ENCODE measurements at regions of chr3 and their contacts with region 1.

Region 1: DNA sequence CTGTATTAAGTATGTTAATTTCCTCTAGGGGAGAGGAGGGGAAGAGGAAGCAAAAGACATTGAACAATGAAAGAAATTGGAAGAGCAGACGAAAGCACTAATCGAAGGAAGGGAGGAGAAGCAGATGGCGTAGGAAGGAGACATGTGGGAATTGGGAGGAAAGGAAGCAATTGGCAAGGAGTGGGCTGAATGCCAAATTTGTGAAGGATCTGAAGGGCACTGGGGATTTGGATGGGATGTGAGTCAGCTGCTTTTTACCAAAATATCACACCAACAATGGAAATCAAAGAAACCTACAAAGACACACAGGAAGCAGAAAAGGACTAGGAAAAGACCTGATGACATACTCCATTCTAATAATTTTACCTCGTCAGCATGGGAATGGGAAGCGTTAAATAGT is 1029.8 kb downstream of the ROBO1 start:
- DNase-seq: no peak
- ATAC-seq: no peak
- H3K4me3 ChIP-seq: no peak overlapping the region
- H3K27ac ChIP-seq: no peak overlapping the region
- H3K4me1 ChIP-seq: no peaks in the 10 kb centered on the region
- H3K27me3 ChIP-seq: no peaks in the 10 kb centered on the region
- CTCF ChIP-seq: no peak
- EP300 ChIP-seq: no peak
- POLR2A ChIP-seq: no peak
- RAD21 ChIP-seq: no peak

Region 2: DNA sequence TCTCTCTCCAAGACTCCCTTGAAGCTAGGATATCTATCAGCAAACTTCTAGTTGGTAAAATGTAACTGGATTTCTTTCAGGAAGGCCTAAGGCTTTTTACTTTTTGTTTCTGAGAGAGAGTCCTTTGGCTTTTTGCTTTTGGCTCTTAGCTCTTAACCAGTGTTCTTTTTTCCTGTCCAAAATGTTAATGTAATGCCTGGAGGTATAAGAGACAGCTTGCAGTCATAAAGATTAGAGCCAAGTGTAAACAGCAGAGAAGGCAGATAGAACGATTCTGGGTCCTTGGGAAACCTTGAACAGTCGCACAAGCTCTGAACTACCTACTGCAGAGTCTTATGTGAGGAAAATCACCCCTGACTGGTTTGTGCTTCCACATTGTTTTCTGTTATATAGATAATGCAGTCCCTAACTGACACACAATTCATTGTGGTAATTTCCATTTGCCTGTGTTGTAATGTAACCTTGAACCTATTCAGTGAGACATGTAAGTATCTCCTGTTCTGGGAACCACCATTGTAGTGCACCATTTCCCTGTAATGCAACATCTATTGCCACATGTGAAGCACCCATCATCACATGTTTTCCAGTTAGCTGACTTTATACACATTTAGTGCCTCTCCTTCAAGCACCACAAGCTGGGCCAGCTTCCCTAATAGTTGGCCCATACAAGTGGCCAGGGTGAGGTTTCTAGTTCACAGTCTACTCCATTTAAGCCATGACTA is 282.1 kb before region 1 on chr3:
- CTCF ChIA-PET with region 1: no interaction called
- POLR2A ChIA-PET with region 1: no interaction called
- RAD21 ChIA-PET with region 1: no interaction called
- SMC1A ChIA-PET with region 1: no interaction called
- in situ Hi-C with region 1: no loop called
- intact Hi-C with region 1: no loop called
- DNase-seq: no peak
- ATAC-seq: no peak
- H3K4me3 ChIP-seq: no peak overlapping the region
- H3K27ac ChIP-seq: no peak overlapping the region
- H3K4me1 ChIP-seq: no peaks in the 10 kb centered on the region
- H3K27me3 ChIP-seq: no peaks in the 10 kb centered on the region
- CTCF ChIP-seq: no peak
- EP300 ChIP-seq: no peak
- POLR2A ChIP-seq: no peak
- RAD21 ChIP-seq: no peak

Region 3: DNA sequence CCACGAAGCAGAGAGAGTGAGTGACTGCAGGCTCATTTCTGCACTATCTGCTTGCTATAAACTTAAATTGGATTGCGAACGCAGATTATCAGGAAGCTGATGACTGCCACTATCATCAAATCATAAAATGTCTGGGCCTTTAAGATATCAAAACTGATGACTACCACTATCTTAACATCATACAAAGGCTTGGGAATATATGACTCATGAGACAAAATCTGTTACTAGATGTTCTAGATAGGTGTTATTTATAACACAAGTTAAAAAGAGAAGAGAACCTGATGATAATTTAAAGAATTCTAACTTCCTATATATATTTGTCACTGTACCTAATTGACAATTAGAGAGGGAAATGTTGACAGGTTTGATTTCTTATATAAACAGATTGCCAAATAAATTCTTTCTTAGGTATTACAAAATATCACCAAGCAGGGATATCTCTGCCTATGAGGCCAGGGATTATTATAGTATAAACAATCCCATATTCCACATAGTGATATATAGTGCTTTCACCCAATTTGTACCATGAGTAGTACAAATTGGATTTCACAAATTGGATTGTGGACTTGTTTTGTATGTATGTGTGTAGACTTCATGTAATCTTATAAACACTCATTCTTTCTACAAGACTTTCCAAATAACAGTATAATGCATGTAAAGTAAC is 127.4 kb before region 1 on chr3:
- CTCF ChIA-PET with region 1: no interaction called
- POLR2A ChIA-PET with region 1: no interaction called
- RAD21 ChIA-PET with region 1: no interaction called
- SMC1A ChIA-PET with region 1: no interaction called
- in situ Hi-C with region 1: no loop called
- intact Hi-C with region 1: no loop called
- DNase-seq: no peak
- ATAC-seq: no peak
- H3K4me3 ChIP-seq: no peak overlapping the region
- H3K27ac ChIP-seq: no peak overlapping the region
- H3K4me1 ChIP-seq: no peaks in the 10 kb centered on the region
- H3K27me3 ChIP-seq: no peaks in the 10 kb centered on the region
- CTCF ChIP-seq: no peak
- EP300 ChIP-seq: no peak
- POLR2A ChIP-seq: no peak
- RAD21 ChIP-seq: no peak

Region 4: DNA sequence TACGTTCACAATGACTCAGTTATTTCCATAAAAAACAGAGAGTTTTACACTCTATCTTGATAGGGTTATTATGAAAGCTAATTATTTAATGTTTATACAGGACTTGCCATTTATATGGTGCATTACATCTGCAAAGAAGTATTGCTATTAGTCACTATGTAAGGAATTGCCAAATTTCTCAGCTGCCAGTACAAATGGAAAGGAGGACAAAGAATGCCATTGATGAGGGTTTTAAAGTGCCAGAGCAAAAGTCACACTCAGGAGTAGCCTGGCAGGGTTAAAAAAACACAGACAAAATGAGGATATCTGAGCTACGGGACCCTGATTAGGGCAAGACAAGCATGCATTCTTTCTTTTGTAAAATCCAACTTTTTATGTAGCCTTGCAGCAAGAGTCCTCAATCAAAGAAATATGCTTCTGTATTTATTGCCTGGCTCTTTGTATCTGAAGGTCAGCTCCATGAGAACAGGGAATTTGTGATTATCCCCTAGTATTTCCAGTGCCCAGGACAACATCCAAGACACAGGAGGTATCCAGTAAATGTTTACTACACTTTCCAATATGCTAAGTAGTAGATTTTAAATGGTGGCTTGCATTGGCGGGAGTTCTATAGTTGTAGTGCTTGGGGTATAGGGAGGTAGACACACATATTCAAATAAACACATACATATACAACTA is 16.2 kb after region 1 on chr3:
- CTCF ChIA-PET with region 1: interaction called, 4 read pairs
- POLR2A ChIA-PET with region 1: no interaction called
- RAD21 ChIA-PET with region 1: interaction called, 4 read pairs
- SMC1A ChIA-PET with region 1: interaction called, 14 read pairs
- in situ Hi-C with region 1: no loop called
- intact Hi-C with region 1: no loop called
- DNase-seq: no peak
- ATAC-seq: no peak
- H3K4me3 ChIP-seq: no peak overlapping the region
- H3K27ac ChIP-seq: no peak overlapping the region
- H3K4me1 ChIP-seq: no peaks in the 10 kb centered on the region
- H3K27me3 ChIP-seq: no peaks in the 10 kb centered on the region
- CTCF ChIP-seq: no peak
- EP300 ChIP-seq: no peak
- POLR2A ChIP-seq: no peak
- RAD21 ChIP-seq: no peak

Region 5: DNA sequence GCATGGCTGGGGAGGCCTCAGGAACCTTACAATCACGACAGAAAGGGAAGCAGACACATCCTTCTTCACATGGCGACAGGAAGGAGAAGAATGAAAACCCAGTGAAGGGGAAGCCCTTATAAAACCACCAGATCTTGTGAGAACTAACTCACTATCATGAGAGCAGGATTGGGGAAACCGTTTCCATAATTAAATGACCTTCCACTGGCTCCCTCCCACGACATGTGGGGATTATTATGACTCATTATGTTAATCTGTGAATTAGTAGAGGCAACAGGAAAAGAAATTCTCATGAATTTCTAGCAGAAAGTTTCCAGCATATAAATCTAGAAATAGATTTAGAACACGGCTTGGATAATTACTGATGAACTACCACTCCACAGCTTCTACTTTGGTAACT is 92.5 kb after region 1 on chr3:
- CTCF ChIA-PET with region 1: no interaction called
- POLR2A ChIA-PET with region 1: no interaction called
- RAD21 ChIA-PET with region 1: interaction called, 6 read pairs
- SMC1A ChIA-PET with region 1: interaction called, 7 read pairs
- in situ Hi-C with region 1: no loop called
- intact Hi-C with region 1: loop called (anchors 2 kb)
- DNase-seq: no peak
- ATAC-seq: no peak
- H3K4me3 ChIP-seq: no peak overlapping the region
- H3K27ac ChIP-seq: no peak overlapping the region
- H3K4me1 ChIP-seq: no peaks in the 10 kb centered on the region
- H3K27me3 ChIP-seq: no peaks in the 10 kb centered on the region
- CTCF ChIP-seq: no peak
- EP300 ChIP-seq: no peak
- POLR2A ChIP-seq: no peak
- RAD21 ChIP-seq: no peak

Region 6: DNA sequence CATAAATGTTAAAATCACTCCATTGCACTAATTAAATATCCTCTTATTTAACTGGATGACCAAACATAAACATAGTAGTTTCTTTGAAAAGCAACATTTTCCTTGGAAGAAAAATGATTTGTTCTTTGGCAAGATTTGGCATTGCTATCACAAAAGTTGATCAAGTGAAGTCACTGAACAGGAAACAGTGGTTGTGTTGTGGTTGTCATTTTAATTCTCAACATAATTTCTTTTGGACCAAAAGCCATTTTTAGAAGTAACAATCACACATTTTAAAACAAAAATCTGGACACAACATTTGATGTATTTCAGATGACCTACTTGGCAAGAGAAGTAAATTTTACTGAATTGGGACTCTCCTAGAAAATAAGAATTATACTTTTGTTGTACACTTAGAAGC is 157.5 kb after region 1 on chr3:
- CTCF ChIA-PET with region 1: no interaction called
- POLR2A ChIA-PET with region 1: no interaction called
- RAD21 ChIA-PET with region 1: no interaction called
- SMC1A ChIA-PET with region 1: no interaction called
- in situ Hi-C with region 1: no loop called
- intact Hi-C with region 1: no loop called
- DNase-seq: no peak
- ATAC-seq: no peak
- H3K4me3 ChIP-seq: no peak overlapping the region
- H3K27ac ChIP-seq: no peak overlapping the region
- H3K4me1 ChIP-seq: no peaks in the 10 kb centered on the region
- H3K27me3 ChIP-seq: no peaks in the 10 kb centered on the region
- CTCF ChIP-seq: no peak
- EP300 ChIP-seq: no peak
- POLR2A ChIP-seq: no peak
- RAD21 ChIP-seq: no peak

Measured in GM12878 (cell line).